Vagina (tissue), 2 donors: ENCODE measurements at regions of chr2 and their contacts with region 1.

Region 1: DNA sequence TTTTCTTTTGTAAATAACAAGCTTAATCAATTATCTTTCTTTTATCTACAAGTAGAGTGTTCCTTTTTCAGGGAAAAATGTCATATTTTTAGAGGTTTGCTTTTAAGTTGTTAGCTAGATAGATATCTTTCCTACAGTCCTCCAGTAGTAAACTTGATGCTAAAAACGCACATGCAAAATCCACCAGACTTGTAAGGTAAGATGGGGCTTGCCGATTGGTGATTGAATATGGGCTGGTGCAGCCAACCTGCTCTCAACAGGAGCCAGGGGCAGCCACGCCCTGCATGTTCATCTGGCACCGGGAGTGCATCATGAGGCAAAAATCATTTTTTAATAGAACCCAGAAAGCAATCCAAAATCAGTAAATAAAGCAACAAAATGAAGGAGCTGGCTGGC is 457.6 kb downstream of the EIPR1 start:
- DNase-seq: peak; percentile 27 to 43
- H3K4me3 ChIP-seq: no peak overlapping the region
- H3K27ac ChIP-seq: no peak overlapping the region
- H3K4me1 ChIP-seq: no peaks in the 10 kb centered on the region
- H3K27me3 ChIP-seq: no peaks in the 10 kb centered on the region
- CTCF ChIP-seq: no peak
- POLR2A ChIP-seq: no peak

Region 2: DNA sequence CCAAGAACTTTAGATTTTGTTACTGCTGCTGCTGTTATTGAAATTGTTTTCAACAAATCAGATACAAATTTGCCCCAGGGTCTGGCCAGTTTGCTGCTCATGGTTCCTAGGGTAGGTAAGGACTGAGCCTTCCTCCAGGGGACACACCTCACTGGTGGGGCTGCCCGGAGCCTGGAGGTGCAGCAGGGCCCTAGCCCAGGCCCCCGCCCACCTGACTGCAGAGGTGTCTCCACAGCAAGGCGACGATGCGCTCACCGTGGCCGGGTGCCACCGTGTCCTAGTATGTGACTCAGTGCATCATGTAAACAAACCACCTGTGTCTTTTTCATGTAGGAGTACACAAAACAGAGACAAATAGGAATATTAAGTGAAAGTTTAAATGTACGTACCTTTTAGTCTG is 1660.2 kb before region 1 on chr2:
- intact Hi-C with region 1: loop called (anchors 5 kb)
- DNase-seq: peak in 1 of 2 donors; percentile 34
- H3K4me3 ChIP-seq: no peak overlapping the region
- H3K27ac ChIP-seq: no peak overlapping the region
- H3K4me1 ChIP-seq: no peaks in the 10 kb centered on the region
- H3K27me3 ChIP-seq: no peaks in the 10 kb centered on the region
- CTCF ChIP-seq: no peak
- POLR2A ChIP-seq: no peak